Astrocyte of the cerebellum (primary cell): ENCODE measurements at regions of chr9 and their contacts with region 1.

Region 1: DNA sequence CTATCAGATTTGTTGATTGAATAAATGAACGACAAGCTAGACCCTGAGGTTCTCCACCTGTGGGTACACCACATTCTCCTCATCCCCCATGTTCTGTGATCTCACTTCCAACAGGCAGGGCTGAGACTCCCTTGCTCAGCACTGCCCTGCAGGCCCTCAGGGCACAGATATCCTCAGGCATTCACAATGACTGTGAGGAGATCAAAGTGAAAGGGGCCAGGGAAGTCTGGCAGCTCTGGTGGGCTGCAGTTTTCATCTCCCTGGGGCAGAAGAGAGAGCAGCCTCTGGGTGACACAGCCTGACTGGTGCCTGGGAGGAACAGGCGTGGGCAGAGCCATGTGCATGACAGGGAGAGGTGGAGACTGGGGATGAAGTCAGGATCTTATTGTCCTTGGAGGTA is 142.4 kb upstream of the C9orf72 start:
- DNase-seq: no peak
- H3K4me3 ChIP-seq: no peak overlapping the region
- CTCF ChIP-seq: no peak

Region 2: GRCh38 chr9:27664121-27664779 is 51.4 kb before region 1 on chr9:
- in situ Hi-C with region 1: loop called (anchors 5 kb)
- DNase-seq: no peak
- H3K4me3 ChIP-seq: no peak overlapping the region
- CTCF ChIP-seq: no peak

Region 3: DNA sequence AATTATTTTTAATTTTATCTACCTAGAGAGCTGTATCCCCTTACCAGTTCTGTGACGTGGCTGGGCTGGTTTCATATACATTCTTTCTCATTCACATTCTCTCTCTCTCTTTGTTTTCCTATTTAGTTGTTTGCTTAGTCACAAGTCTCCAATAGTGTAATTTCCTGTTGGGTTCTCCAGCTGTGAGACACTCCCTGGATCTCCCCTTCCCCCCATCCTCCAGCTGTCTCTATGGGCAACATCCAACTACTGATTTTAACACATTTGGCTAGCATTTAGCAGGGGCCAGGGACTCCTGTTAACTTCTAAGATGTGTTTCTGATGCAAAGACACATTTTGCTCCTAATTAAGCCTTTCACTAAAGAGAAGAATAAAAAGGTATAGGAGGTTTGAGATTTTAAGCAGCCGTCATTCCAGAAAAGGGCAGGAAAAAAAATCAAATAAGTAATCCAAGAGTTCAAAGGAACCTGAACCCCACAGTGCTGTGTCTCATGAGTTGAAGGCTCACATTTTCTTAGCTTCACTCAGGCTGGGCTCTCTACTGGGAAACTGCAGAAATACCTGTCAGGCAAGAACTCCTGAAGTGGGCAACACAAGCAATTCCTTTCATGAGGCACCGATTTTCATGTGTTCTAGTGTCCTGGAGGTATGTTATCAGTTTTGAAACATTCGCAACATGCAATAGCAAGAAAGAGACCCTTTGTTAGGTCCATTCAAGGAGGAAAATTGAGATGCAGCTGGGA is 56.3 kb after region 1 on chr9:
- in situ Hi-C with region 1: no loop called
- DNase-seq: no peak
- H3K4me3 ChIP-seq: no peak overlapping the region
- CTCF ChIP-seq: no peak

Region 4: DNA sequence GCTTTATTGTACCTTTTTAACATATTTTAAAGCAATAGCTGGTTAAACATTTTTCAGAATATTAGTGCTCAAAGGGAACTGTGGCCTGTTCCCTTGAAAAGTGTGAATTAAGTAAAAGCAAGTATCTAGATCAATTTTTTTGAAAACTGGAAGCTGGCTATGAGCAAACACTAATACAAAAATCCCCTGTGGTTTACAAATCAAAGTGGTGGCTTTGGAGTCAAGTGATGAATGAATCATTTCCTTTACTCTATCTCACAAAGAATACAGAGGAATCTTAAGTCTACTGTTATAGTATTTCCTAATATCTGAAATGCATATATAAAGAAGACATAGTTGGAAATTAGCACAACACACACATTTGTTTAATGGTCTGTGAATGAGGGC is 70.1 kb after region 1 on chr9:
- in situ Hi-C with region 1: no loop called
- DNase-seq: no peak
- H3K4me3 ChIP-seq: no peak overlapping the region
- CTCF ChIP-seq: no peak